Cardiac septum (tissue), 1 donor: ENCODE measurements at regions of chr2 and their contacts with region 1.

Region 1: DNA sequence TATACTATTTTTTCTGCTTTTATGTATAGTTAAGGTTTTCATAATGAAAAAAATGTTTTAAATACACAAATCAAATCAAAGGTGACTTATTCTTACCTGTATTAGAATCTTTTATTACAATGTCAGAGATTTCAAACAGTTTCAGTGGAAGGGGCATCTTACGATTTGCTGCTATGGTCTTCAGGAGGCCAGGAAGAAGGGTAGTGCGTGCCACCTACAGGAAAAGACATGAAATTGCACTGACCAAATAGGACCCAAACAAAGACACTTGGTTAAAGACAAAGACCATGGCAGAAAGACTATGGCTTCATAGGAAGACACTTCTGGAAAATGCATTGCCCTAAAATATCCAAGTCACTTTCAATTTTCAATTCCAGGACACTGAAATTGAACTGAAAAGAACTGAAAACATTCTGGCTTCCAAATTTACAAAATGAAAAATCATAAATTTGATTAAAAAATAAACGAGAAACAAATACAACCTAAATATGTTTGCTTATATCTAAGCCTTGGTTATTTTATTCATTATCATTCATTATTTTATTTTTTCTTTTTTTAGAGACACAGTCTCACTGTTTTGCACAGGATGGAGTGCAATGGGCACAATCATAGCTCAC is 42.1 kb downstream of the FARSB start:
- DNase-seq: no peak

Region 2: DNA sequence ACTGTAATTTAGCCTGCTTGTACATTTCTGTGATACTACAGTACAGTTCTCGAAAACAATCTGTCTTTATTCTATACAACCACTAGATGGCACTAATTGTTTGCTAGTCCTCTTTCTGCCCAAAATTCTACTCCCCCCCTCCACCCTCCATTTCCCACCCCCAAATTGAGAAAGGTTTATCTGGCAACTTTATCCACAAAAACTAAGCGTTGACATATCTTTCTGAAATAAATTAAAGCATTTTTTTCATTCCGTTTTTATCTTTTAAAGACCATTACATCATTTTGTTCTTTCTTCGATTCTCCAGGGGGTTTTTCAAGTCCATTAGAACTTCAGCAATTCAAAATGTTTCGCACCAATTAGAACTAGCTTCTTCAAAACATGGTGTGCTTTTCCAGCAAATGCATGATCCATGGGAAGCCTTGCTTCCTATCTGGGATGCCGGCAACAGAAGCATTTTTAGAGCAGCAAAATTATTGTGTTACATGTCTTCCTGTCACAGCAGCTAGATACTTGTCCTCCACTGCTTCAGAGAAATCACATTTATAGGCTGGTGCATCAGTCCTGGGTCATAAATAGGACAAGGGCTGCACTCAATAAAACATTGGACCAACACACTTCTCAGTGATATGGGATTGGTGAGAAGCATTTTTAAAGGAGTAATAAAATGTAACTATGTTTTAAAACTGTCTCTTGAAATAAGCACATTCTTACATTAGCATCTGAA is 556.3 kb before region 1 on chr2:
- intact Hi-C with region 1: loop called (anchors 10 kb)
- DNase-seq: no peak

Region 3: DNA sequence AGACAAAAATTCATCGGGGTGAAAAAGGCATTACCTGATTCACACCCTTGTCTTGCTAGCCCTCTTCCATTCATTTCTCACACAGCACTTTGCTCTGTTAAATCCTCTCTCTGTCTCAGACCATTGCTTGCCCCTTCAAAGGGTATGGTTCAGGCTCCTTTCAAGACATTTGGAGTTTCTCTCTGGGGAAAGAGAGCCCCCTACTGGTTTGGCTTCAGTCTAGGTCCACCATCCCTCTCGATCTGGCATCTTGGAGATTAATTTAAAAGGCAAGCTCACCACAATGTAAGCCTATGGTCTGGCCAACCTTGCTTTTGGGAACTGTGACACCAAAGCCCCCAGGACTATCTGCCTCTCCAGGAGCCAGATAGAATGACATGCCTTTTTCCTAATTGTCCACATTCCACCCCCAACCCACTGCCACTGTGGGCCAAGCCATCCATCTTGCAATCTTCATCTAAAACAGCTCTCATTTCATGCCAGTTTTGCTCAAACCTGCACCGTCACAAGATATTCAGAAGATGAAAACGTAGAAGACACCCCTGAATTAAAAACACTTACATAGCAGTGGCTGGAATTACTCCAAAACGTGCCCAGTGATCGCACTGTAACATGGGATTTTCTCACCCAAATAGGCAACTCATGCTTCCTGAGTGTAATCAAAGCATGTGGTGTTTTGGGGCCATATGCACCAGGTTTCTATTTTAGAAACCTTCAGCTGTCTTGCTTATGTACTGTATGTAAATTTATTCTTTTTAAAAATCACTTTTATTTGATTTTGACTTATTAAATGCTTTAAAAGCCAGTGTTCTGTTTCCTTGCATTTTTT is 51.8 kb before region 1 on chr2:
- intact Hi-C with region 1: loop called (anchors 10 kb)
- DNase-seq: no peak